ENCODE measurements at regions of chr9 and their contacts with region 1.

Region 1: GRCh38 chr9:13427587-13427986 is 148.1 kb upstream of the MPDZ start:
- DNase-seq: no peak
- H3K4me3 ChIP-seq: no peak overlapping the region
- H3K27me3 ChIP-seq: no peaks in the 10 kb centered on the region; the same call in 1 of the 2 replicates
- CTCF ChIP-seq: peak; percentile 56

Region 2: DNA sequence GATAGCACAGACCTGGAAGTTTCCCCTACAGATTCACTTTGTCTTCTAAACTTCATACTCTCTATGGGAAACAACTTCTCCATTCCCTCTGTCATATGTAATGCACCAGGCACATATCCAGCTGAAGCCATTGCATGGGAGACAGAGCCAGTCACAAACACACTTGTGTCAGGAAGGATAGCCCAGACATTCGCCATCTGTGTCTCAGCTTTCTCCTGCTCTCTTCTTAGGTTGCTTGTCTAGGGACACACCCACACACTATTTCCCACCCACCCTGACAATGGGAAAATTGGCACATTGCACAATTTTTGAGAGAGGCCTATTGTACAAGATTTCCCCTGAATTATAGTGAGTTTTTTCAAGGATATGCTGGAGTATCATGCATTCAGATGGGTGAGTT is 10.3 kb after region 1 on chr9:
- CTCF ChIA-PET with region 1: interaction called, 20 read pairs
- POLR2A ChIA-PET with region 1: no interaction called
- DNase-seq: no peak
- H3K4me3 ChIP-seq: no peak overlapping the region
- H3K27me3 ChIP-seq: 0 out of 2 replicates have a peak, but pooled peaks cover 2% of the 10 kb centered on the region
- CTCF ChIP-seq: no peak

Region 3: DNA sequence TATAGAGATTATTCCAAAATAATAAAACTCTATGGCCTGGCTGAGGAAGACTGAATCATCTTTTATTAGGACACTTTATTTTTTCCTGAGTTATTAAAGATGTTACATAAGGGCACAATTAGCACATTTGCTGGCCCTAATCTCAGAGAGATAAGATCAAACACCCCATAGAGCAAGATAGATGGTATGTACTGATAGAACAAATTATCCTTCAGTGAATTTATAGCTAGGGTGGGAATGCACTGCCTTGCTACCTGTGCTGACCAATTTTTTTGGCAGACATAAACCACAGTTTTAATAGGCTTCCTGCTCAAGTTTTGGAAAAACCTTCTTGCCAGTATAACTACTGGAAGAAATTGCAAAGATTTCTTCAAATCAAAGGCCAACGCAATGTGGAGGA is 219.0 kb after region 1 on chr9:
- CTCF ChIA-PET with region 1: no interaction called
- POLR2A ChIA-PET with region 1: no interaction called
- DNase-seq: no peak
- H3K4me3 ChIP-seq: no peak overlapping the region
- H3K27me3 ChIP-seq: no peaks in the 10 kb centered on the region
- CTCF ChIP-seq: no peak

Region 4: GRCh38 chr9:14353222-14354056 is 925.9 kb after region 1 on chr9:
- CTCF ChIA-PET with region 1: interaction called, 58 read pairs
- POLR2A ChIA-PET with region 1: no interaction called
- DNase-seq: no peak
- H3K4me3 ChIP-seq: no peak overlapping the region
- H3K27me3 ChIP-seq: peaks cover 33% of the 10 kb centered on the region
- CTCF ChIP-seq: peak; percentile 94

Measured in BJ (cell line).